AG04450 (cell line): ENCODE measurements at regions of chr1 and their contacts with region 1.

Region 1: GRCh38 chr1:241611063-241611462 is 29.1 kb downstream of the CHML start:
- DNase-seq: no peak
- H3K4me3 ChIP-seq: no peak overlapping the region
- H3K27ac ChIP-seq: no peak overlapping the region
- H3K27me3 ChIP-seq: no peaks in the 10 kb centered on the region
- CTCF ChIP-seq: peak; percentile 60

Region 2: DNA sequence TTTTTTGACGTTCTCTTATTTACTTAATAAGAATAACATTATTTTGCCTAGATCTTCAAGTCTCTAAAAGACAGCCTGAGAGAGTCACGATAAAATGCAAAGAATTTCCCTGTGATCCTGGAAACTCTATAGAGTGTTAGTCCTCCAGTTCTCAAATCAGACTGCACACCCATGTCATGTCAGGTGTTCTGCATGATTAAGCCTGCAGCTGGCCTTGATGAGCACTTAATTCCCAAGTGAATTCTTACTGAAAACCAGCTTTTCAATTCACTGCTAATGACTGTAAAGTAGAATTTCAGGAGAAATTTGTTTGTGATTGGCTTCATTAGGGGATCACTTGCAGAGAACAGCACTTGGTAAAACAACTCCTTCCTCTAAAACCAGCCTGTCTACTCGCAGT is 12.8 kb before region 1 on chr1:
- CTCF ChIA-PET with region 1: interaction called, 19 read pairs
- POLR2A ChIA-PET with region 1: interaction called, 4 read pairs
- DNase-seq: no peak
- H3K4me3 ChIP-seq: no peak overlapping the region
- H3K27ac ChIP-seq: no peak overlapping the region
- H3K27me3 ChIP-seq: no peaks in the 10 kb centered on the region
- CTCF ChIP-seq: no peak

Region 3: DNA sequence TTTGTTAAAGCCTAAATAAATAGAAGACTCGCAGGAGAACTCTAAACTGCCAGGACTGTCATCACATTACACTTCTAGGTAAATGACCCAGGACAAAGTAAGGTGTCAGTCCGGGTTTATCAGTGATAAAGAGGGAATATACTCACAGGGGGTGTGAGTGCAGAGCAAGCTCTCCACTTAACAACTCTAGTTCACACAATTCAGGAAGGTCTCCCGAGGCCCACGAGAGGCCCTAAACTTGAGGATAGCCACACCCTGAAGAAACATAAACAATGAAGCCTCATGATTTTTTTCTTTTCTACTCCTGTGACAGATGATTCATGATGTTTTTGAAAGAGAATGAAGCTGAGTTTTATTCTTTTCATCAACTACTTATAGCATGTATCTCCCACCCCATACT is 171.3 kb after region 1 on chr1:
- CTCF ChIA-PET with region 1: interaction called, 10 read pairs
- POLR2A ChIA-PET with region 1: no interaction called
- DNase-seq: no peak
- H3K4me3 ChIP-seq: no peak overlapping the region
- H3K27ac ChIP-seq: no peak overlapping the region
- H3K27me3 ChIP-seq: no peaks in the 10 kb centered on the region
- CTCF ChIP-seq: no peak

Region 4: GRCh38 chr1:241834733-241835377 is 223.8 kb after region 1 on chr1:
- CTCF ChIA-PET with region 1: interaction called, 45 read pairs
- POLR2A ChIA-PET with region 1: interaction called, 4 read pairs
- DNase-seq: peak; percentile 32
- H3K4me3 ChIP-seq: no peak overlapping the region
- H3K27ac ChIP-seq: no peak overlapping the region
- H3K27me3 ChIP-seq: no peaks in the 10 kb centered on the region
- CTCF ChIP-seq: peak; percentile 85

Region 5: DNA sequence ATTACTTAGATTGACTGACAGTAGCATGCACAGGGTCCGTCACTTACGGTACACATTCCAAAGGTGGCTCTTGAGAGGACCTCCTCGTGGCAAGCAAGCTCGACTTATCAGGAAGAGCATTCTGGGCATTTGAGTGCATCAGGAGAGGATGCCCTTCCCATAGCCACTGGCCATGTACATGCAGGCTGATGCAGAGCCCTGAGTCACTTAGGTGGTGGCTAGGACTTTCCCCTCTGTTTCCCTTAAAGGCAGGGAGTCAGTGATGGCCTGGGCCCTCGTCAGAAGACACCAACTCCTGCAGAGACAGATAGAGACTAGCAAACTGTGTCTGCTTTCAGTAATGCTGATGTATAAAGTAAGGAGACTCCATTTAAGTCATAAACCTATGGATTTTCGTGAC is 249.9 kb after region 1 on chr1:
- CTCF ChIA-PET with region 1: interaction called, 16 read pairs
- POLR2A ChIA-PET with region 1: no interaction called
- DNase-seq: no peak
- H3K4me3 ChIP-seq: no peak overlapping the region
- H3K27ac ChIP-seq: no peak overlapping the region
- H3K27me3 ChIP-seq: no peaks in the 10 kb centered on the region
- CTCF ChIP-seq: no peak

Region 6: DNA sequence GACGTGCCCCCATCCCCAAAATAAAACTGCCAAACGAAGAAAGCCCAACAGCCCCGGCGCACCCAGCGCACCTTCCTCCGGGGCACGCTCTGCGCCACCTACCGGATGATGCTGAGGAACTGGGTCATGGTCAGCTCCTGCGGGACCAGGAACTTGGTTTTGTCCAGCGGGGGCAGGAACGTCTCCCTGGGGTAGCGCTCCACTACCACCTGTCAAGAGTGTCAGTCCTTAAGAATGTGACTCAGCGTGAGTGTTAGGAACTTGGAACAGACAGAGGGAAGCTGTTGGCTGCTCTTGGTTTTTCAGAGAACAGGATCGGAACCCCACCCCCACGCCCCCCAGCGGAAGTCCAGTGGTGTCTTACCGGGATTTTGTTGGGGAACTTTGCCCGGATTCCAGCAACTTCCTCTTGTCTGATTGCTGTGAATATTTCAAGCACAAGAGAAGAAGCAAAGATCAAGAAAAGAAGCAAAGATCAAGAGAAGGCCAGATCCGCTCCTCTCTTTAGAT is 387.4 kb after region 1 on chr1:
- CTCF ChIA-PET with region 1: interaction called, 33 read pairs
- POLR2A ChIA-PET with region 1: no interaction called
- DNase-seq: peak; percentile 38
- H3K4me3 ChIP-seq: peak overlapping the region; percentile 54
- H3K27ac ChIP-seq: no peak overlapping the region
- H3K27me3 ChIP-seq: no peaks in the 10 kb centered on the region
- CTCF ChIP-seq: peak; percentile 75